ENCODE measurements at regions of chr9 and their contacts with region 1.

Region 1: DNA sequence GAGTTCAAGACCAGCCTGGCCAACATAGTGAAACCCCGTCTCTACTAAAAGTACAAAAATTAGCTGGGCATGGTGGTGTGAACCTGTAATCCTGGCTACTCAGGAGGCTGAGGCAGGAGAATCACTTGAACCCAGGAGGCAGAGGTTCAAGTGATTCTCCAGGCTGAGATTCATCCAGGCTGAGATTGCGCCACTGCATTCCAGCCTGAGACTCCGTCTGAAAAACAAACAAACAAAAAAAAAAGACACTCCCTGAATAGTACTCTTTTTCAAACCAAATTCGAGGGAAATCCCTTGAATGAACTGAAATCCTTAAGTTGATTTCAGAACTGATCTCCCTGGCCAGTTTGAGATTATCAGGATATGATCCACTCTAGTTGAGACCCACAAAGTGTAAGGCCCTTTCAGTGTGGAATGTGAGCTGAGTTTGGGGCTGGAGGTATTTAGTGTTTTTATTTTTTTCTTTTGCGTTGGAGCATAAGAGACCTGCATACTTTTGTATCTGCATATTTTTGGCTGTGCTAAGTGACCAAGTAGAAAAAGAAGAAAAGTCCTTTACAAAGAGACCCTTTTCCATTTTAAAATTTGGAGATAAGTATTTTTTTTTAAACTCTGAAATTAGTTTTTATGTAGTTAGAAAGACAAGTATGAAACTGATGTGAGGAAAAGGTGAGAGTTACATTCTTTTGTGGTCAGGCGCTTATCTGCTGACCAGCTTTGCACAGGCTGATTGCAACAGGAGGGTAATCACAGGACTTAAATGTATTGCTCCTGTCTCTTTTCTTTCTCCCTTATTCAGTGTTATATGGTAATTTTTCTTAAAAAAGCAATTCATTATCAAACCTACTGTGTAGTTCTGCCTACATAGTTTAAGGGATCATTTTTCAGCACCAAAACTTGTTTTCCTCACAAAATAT is 42.9 kb downstream of the TMEFF1 start:
- DNase-seq: no peak
- H3K4me3 ChIP-seq: no peak overlapping the region
- H3K27ac ChIP-seq: no peak overlapping the region
- H3K4me1 ChIP-seq: no peaks in the 10 kb centered on the region
- H3K27me3 ChIP-seq: no peaks in the 10 kb centered on the region
- CTCF ChIP-seq: no peak
- EP300 ChIP-seq: no peak
- POLR2A ChIP-seq: no peak

Region 2: DNA sequence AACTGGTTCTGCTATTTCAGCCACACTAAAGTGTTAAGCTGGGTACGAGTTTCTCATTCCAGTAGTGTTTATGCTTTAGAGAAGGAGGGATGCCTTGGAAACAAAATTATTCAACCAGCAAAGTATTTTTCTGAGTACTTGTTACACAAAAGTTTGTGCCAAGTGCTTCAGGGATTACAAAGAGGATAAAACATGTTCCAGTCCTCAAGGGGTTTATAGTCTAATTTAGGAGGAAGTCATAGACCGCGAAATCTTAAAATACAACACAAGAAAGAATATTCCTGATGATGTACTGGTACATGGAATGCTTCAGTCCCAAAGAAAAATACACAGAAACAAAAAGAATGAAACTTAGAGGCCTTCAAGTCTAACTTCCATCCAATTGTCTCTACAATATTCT is 779.5 kb before region 1 on chr9:
- in situ Hi-C with region 1: no loop called
- intact Hi-C with region 1: loop called (anchors 5 kb)
- DNase-seq: no peak
- H3K4me3 ChIP-seq: no peak overlapping the region
- H3K27ac ChIP-seq: no peak overlapping the region
- H3K4me1 ChIP-seq: no peaks in the 10 kb centered on the region
- H3K27me3 ChIP-seq: no peaks in the 10 kb centered on the region
- CTCF ChIP-seq: no peak
- EP300 ChIP-seq: no peak
- POLR2A ChIP-seq: no peak

Region 3: GRCh38 chr9:100455470-100455869 is 60.4 kb before region 1 on chr9:
- in situ Hi-C with region 1: loop called in 1 of 4 experiments (anchors 10 kb)
- intact Hi-C with region 1: no loop called
- DNase-seq: no peak
- H3K4me3 ChIP-seq: no peak overlapping the region
- H3K27ac ChIP-seq: no peak overlapping the region
- H3K4me1 ChIP-seq: no peaks in the 10 kb centered on the region
- H3K27me3 ChIP-seq: no peaks in the 10 kb centered on the region
- CTCF ChIP-seq: no peak
- EP300 ChIP-seq: no peak
- POLR2A ChIP-seq: no peak

Region 4: GRCh38 chr9:101366038-101366756 is 850.4 kb after region 1 on chr9:
- in situ Hi-C with region 1: no loop called
- intact Hi-C with region 1: no loop called
- DNase-seq: no peak
- H3K4me3 ChIP-seq: no peak overlapping the region
- H3K27ac ChIP-seq: no peak overlapping the region
- H3K4me1 ChIP-seq: no peaks in the 10 kb centered on the region
- H3K27me3 ChIP-seq: no peaks in the 10 kb centered on the region
- CTCF ChIP-seq: no peak
- EP300 ChIP-seq: no peak
- POLR2A ChIP-seq: no peak

Measured in transverse colon (tissue), 4 donors.